ENCODE measurements at regions of chr3 and their contacts with region 1.

Region 1: GRCh38 chr3:54374214-54374855 is 252.0 kb downstream of the CACNA2D3 start:
- DNase-seq: peak; percentile 31
- H3K4me3 ChIP-seq: no peak overlapping the region
- H3K27ac ChIP-seq: no peak overlapping the region
- H3K4me1 ChIP-seq: no peaks in the 10 kb centered on the region
- H3K27me3 ChIP-seq: no peaks in the 10 kb centered on the region
- CTCF ChIP-seq: peak; percentile 49

Region 2: GRCh38 chr3:54146506-54147239 is 227.7 kb before region 1 on chr3:
- intact Hi-C with region 1: loop called (anchors 2 kb)
- DNase-seq: peak; percentile 37
- H3K4me3 ChIP-seq: no peak overlapping the region
- H3K27ac ChIP-seq: no peak overlapping the region
- H3K4me1 ChIP-seq: no peaks in the 10 kb centered on the region
- H3K27me3 ChIP-seq: no peaks in the 10 kb centered on the region
- CTCF ChIP-seq: peak; percentile 51

Measured in colonic mucosa (tissue), 4 donors.